ENCODE measurements at regions of chr1 and their contacts with region 1.

Region 1: GRCh38 chr1:174769961-174770549 is 229.7 kb upstream of the CACYBP start:
- DNase-seq: peak; percentile 80
- H3K4me3 ChIP-seq: no peak overlapping the region
- H3K27ac ChIP-seq: peak overlapping the region; percentile 59
- H3K4me1 ChIP-seq: peaks cover 63% of the 10 kb centered on the region
- CTCF ChIP-seq: peak; percentile 99

Region 2: DNA sequence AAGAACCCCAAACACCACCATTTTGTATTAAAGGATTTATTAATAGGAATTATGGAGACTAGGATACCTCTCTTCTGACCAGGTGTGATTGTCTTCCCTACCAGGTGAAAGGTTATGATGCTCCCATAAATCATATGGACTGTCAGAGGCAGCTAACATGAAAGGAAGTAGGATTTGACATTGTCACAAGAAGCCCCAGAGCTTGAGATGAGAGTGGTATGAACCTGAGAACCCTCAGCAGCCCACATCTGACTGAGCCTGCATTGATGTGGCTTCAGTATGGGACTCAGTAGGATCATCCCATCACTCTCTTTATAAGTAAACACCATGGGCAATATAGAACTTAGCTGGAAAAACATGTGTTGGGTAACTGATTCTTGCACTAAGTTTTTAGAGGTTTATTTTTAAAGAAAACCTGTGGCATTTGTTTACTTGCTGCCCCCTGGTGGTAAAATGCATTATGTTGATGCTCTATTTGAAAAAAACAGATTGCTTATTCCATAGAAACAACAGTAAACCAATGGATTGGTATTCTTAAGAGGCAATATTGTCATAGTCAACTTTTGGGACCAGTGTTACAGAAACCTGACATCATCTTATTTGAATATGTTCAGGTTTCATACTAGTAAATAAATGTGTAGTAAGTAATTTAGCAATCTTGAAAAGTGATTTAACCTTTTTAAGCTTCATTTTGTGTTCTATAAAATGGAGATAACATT is 213.1 kb after region 1 on chr1:
- CTCF ChIA-PET with region 1: no interaction called
- POLR2A ChIA-PET with region 1: no interaction called
- intact Hi-C with region 1: loop called (anchors 1 kb)
- DNase-seq: peak; percentile 76
- H3K4me3 ChIP-seq: no peak overlapping the region
- H3K27ac ChIP-seq: peak overlapping the region; percentile 14
- H3K4me1 ChIP-seq: peaks cover 7% of the 10 kb centered on the region
- CTCF ChIP-seq: peak; percentile 98

Region 3: DNA sequence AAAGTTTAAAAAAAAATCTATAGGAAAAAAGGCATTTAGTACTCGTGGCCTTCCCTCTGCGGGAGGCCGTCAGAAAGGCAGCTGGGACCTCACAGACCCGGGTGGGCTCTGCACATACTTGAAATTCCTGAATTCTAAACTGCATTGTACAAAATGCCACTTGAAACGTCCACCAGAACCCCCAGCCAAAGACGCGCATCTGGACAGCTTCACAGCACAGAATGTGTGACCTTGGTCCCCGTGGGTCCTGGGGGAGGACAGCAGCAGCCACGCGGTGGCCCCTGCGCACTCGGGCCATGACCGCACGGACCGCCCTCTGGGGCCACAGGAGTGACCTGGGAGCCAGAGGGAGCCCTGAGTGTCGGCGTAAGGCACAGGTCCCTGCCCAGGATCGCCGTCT is 273.8 kb after region 1 on chr1:
- CTCF ChIA-PET with region 1: no interaction called
- POLR2A ChIA-PET with region 1: no interaction called
- intact Hi-C with region 1: no loop called
- DNase-seq: no peak
- H3K4me3 ChIP-seq: no peak overlapping the region
- H3K27ac ChIP-seq: no peak overlapping the region
- H3K4me1 ChIP-seq: no peaks in the 10 kb centered on the region
- CTCF ChIP-seq: no peak

Region 4: DNA sequence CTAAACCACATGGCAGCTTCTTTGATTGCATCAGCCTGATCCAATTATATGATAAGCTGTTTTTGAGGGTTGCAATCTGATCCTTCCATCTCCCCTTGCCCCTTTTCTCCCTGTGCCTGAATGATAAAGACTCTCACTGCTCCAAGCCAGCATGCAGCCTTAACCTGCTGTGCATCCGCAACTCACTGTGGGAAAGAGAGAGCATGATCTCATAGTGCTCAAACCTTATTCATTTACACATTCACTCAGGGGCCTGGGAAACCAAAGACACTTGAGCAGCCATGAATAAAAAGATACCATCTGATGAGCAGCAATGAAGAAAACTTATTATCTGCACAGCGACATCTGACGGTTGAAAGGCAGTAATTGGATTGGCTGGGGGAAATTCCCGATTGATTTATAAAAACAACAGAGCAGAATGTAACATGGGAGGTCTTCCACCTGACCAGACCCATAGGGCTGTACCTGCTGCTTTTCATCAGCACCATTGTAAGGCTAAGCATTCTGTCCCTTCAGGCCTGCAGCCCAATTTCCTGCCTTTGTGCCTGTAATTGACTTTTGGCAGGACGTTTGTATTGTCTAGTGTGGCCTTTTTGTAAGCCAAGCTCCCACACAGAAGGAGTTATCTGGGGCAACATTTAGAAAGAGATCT is 360.1 kb after region 1 on chr1:
- CTCF ChIA-PET with region 1: no interaction called
- POLR2A ChIA-PET with region 1: no interaction called
- intact Hi-C with region 1: loop called (anchors 5 kb)
- DNase-seq: peak; percentile 27
- H3K4me3 ChIP-seq: no peak overlapping the region
- H3K27ac ChIP-seq: no peak overlapping the region
- H3K4me1 ChIP-seq: peaks cover 28% of the 10 kb centered on the region
- CTCF ChIP-seq: no peak